Esophagus muscularis mucosa (tissue), 4 donors: ENCODE measurements at regions of chr4 and their contacts with region 1.

Region 1: DNA sequence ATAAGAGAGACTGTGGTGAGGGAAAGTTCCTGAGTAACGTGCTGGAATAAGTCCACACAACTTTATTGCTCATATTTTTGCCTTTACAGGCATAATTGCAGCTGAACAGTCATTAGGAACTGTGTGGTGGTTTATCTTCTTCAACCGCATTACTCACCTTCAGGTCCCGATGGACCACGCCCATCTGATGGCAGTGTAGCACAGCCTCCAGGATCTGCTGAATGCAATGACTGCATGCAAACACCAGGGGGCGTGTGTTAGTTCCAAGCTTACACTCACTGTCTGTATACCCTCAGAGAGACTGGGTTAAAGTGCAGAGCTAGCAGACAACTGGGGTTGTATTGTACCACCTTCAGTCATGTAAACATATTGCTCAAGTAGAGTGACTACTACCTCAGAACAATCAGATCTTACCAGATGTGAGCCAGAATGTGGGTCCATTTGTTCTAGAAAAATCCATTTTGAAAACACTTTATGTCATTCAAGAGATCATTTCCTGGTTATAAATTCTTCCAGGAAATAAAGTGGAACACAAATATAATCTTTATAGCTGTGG is 214.0 kb downstream of the CAMK2D start:
- DNase-seq: peak; percentile 95
- H3K4me3 ChIP-seq: no peak overlapping the region
- H3K27ac ChIP-seq: peak overlapping the region in 3 of 4 donors; percentile 30 to 61 (median 49)
- H3K4me1 ChIP-seq: peaks cover 4 to 13% (median 11%) of the 10 kb centered on the region in 4 donors
- H3K27me3 ChIP-seq: no peaks in the 10 kb centered on the region
- CTCF ChIP-seq: peak; percentile 94 to 99 (median 97)
- EP300 ChIP-seq: no peak
- POLR2A ChIP-seq: no peak

Region 2: DNA sequence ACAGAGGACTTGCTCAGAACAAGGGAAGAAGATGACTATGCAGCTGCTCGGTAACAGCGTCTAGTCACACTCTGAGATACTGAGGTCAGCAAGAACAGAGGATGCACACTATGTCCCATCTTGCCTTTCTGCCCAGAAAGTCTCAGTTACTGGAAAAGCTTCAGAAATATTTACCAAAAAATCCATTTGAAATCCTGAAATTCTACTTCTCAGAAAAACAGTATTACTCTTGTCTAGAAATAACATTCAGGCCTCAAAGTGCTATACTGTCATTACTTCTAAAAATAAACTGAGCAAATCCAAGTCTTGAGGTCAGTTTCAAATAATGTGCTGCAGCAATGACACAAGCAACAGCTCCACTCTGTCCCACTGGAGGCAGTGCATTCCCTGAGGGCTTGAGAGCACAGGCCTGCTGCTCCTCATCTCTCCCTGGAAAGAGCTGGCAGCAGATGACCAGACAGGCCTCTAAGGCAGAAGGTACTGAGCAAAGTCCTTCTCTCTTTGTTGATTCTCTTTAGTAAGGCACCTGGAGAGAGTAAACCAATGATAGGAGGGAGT is 137.0 kb after region 1 on chr4:
- intact Hi-C with region 1: loop called (anchors 10 kb)
- DNase-seq: no peak
- H3K4me3 ChIP-seq: no peak overlapping the region
- H3K27ac ChIP-seq: peak overlapping the region; percentile 50 to 72 (median 60)
- H3K4me1 ChIP-seq: peaks cover 35 to 45% (median 37%) of the 10 kb centered on the region in 4 donors
- H3K27me3 ChIP-seq: no peaks in the 10 kb centered on the region
- CTCF ChIP-seq: peak; percentile 33 to 60 (median 34)
- EP300 ChIP-seq: peak; percentile 88
- POLR2A ChIP-seq: no peak